ENCODE measurements at regions of chr13 and their contacts with region 1.

Region 1: DNA sequence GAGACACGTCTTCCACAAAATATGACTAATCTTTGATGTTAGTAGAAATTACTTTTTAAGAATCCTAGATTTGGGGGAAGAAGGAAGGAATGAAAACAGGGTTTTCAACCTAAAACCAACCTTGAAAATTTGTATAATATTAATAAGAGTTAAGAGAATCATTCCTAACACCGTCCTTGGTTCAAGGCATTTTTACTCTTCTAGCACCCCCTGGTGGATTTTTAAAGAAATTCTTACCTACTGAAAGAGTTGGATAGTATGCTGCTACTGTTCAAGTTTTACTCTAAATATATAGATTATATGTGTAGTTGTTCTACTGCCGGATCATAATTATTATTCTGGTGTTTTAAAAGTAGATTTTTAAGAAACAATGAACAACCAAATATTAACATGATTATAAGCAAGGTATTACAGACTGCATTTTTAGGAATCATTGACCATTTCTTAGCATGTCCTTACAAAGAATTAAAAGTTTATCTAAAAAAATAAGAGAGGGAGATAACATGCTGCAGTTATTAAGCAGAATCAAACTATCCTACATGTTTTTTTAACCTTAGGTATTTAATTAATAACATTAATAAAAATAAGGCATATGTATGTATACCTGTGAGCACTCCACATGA is 7.4 kb upstream of the SLITRK6 start:
- DNase-seq: no peak
- ATAC-seq: no peak
- H3K4me3 Mint-ChIP-seq: no peak overlapping the region
- H3K27ac Mint-ChIP-seq: no peak overlapping the region
- H3K4me1 Mint-ChIP-seq: no peaks in the 10 kb centered on the region
- H3K27me3 Mint-ChIP-seq: no peaks in the 10 kb centered on the region
- CTCF ChIP-seq: peak; percentile 83

Region 2: GRCh38 chr13:84896128-84896527 is 910.5 kb before region 1 on chr13:
- CTCF ChIA-PET with region 1: interaction called, 3 read pairs
- POLR2A ChIA-PET with region 1: no interaction called
- intact Hi-C with region 1: loop called (anchors 1 kb)
- DNase-seq: peak; percentile 36
- ATAC-seq: no peak
- H3K4me3 Mint-ChIP-seq: no peak overlapping the region
- H3K27ac Mint-ChIP-seq: no peak overlapping the region
- H3K4me1 Mint-ChIP-seq: no peaks in the 10 kb centered on the region
- H3K27me3 Mint-ChIP-seq: peaks cover 1% of the 10 kb centered on the region
- CTCF ChIP-seq: peak; percentile 89

Region 3: GRCh38 chr13:84917252-84917878 is 889.3 kb before region 1 on chr13:
- CTCF ChIA-PET with region 1: no interaction called
- POLR2A ChIA-PET with region 1: no interaction called
- intact Hi-C with region 1: loop called (anchors 5 kb)
- DNase-seq: no peak
- ATAC-seq: no peak
- H3K4me3 Mint-ChIP-seq: no peak overlapping the region
- H3K27ac Mint-ChIP-seq: no peak overlapping the region
- H3K4me1 Mint-ChIP-seq: no peaks in the 10 kb centered on the region
- H3K27me3 Mint-ChIP-seq: no peaks in the 10 kb centered on the region
- CTCF ChIP-seq: peak; percentile 45

Region 4: GRCh38 chr13:85772379-85772778 is 34.3 kb before region 1 on chr13:
- CTCF ChIA-PET with region 1: no interaction called
- POLR2A ChIA-PET with region 1: no interaction called
- intact Hi-C with region 1: no loop called
- DNase-seq: no peak
- ATAC-seq: no peak
- H3K4me3 Mint-ChIP-seq: no peak overlapping the region
- H3K27ac Mint-ChIP-seq: no peak overlapping the region
- H3K4me1 Mint-ChIP-seq: no peaks in the 10 kb centered on the region
- H3K27me3 Mint-ChIP-seq: no peaks in the 10 kb centered on the region
- CTCF ChIP-seq: no peak

Region 5: GRCh38 chr13:85833921-85834320 is 27.3 kb after region 1 on chr13:
- CTCF ChIA-PET with region 1: no interaction called
- POLR2A ChIA-PET with region 1: no interaction called
- intact Hi-C with region 1: no loop called
- DNase-seq: no peak
- ATAC-seq: no peak
- H3K4me3 Mint-ChIP-seq: no peak overlapping the region
- H3K27ac Mint-ChIP-seq: no peak overlapping the region
- H3K4me1 Mint-ChIP-seq: no peaks in the 10 kb centered on the region
- H3K27me3 Mint-ChIP-seq: no peaks in the 10 kb centered on the region
- CTCF ChIP-seq: no peak

Region 6: GRCh38 chr13:85995788-85996418 is 189.2 kb after region 1 on chr13:
- CTCF ChIA-PET with region 1: no interaction called
- POLR2A ChIA-PET with region 1: no interaction called
- intact Hi-C with region 1: no loop called
- DNase-seq: no peak
- ATAC-seq: no peak
- H3K4me3 Mint-ChIP-seq: no peak overlapping the region
- H3K27ac Mint-ChIP-seq: no peak overlapping the region
- H3K4me1 Mint-ChIP-seq: no peaks in the 10 kb centered on the region
- H3K27me3 Mint-ChIP-seq: no peaks in the 10 kb centered on the region
- CTCF ChIP-seq: no peak

Measured in activated CD8-positive, alpha-beta T cell treated with anti-CD3 and anti-CD28 coated beads for 36 hours (primary cell).